Aorta (tissue), 5 donors: ENCODE measurements at regions of chr16 and their contacts with region 1.

Region 1: DNA sequence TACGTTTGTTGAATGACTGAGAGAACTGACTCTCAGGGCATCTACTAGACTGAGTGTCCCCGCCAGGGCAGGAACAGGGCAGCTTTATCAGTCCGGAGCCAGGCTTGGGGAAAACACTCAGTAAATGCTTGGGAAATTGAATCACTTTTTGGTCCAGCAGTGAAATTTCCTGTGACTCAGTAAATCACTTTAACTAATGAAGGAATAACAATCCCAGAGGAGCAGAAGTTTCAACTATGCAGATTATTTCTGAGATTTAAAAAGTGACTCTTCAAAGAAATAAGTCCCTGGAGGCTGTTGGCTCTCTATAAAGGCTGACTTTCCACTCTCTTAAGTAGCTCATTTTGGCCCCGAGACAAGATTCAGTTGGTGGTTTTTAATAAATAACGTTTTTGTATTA is 101.8 kb downstream of the FOXL1 start:
- DNase-seq: peak; percentile 69 to 84
- ATAC-seq: peak; percentile 66
- H3K4me3 ChIP-seq: no peak overlapping the region
- H3K27ac ChIP-seq: peak overlapping the region; percentile 58 to 69
- H3K4me1 ChIP-seq: peaks cover 0 to 1% of the 10 kb centered on the region in 2 donors
- H3K27me3 ChIP-seq: no peaks in the 10 kb centered on the region

Region 2: GRCh38 chr16:86611525-86611855 is 68.7 kb before region 1 on chr16:
- intact Hi-C with region 1: loop called in 1 of 2 experiments (anchors 5 kb)
- DNase-seq: peak in 1 of 2 donors; percentile 73
- ATAC-seq: no peak
- H3K4me3 ChIP-seq: no peak overlapping the region
- H3K27ac ChIP-seq: peak overlapping the region in 1 of 2 donors; percentile 86
- H3K4me1 ChIP-seq: peaks cover 5 to 7% of the 10 kb centered on the region in 2 donors
- H3K27me3 ChIP-seq: no peaks in the 10 kb centered on the region

Region 3: DNA sequence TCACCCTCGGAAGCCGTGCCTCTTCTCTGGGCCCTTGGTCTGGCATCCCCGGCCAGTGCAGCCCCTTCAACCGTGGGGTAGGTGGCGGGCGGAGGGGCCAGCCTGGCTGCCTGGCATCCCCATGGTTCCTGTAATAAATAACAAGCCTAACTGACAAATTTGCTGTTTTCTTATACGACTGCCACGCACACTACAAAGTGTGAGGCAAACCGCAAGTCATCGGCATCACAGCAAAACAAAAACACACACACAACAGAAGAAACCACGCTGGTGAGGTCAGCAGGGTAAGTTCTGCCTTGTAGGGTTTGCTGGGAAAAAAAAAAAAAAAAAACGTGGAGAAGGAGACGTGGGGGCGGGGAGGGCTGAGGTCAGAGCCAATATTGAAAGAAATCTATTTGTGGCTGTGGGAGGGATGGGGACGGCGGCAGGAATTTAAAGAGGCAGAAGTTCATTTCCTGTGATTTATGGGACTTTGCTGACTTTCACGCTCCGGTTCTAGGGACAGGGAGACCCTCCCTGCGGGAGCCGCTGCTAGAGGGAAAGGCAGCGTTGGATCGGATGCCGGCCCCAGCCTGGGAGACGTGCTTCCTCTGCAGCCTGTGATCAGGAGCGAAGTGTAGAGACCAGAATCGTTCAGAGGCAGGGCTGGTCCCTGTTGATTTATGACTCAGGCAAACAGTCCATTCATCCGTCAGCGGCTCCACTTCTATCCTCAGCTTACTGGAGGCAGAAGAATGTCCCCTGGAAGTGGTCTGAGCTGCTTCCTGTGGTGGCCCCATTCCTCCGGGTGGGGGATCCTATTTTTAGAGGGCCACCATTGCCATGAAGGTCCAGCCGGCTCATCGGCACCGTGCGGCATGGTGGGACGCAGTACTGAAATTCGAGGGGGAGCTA is 61.0 kb after region 1 on chr16:
- intact Hi-C with region 1: loop called (anchors 1 to 2 kb)
- DNase-seq: peak; percentile 83 to 90
- ATAC-seq: peak; percentile 93
- H3K4me3 ChIP-seq: no peak overlapping the region
- H3K27ac ChIP-seq: peak overlapping the region; percentile 99
- H3K4me1 ChIP-seq: no peaks in the 10 kb centered on the region
- H3K27me3 ChIP-seq: no peaks in the 10 kb centered on the region

Region 4: DNA sequence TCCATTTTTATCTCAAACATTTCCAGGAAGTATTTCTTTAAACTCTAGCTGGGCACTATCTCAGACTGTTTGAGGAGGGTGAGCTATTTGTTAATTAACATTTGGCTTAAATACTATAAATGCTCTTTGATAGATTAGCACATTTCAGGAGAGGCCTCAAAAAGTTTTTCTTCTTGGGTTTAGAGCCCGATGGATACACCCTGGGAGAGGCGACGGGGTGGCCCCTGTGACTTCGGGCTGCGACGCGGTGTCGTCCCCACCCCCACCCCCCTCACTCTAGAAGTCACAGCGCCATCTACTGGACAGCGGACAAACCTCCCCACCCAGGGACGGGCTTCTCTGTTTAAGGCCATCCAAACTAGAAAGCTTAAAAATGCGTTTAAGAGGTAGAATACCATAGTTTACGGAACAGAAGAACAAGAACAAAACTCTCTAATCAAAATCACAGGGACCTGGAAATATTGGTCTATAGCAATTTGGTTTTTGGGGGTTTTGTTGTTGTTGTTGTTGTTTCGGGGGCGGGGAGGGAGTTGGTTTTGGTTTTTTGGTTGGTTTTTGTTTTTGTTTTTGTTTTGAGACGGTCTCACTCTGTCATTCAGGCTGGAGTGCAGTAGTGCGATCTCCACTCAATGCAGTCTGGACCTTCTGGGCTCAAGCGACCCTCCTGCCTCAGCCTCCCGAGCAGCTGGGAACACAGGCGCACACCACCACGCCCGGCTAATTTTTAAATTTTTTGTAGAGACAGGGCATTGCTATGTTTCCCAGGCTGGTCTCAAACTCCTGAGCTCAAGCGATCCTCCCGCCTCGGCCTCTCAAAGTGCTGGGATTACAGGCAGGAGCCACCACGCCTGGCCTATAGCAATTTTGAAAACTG is 382.6 kb after region 1 on chr16:
- intact Hi-C with region 1: loop called (anchors 5 kb)
- DNase-seq: peak; percentile 86 to 92
- ATAC-seq: peak; percentile 91
- H3K4me3 ChIP-seq: no peak overlapping the region
- H3K27ac ChIP-seq: peak overlapping the region in 1 of 2 donors; percentile 45
- H3K4me1 ChIP-seq: no peaks in the 10 kb centered on the region
- H3K27me3 ChIP-seq: no peaks in the 10 kb centered on the region